Left ventricle myocardium superior (tissue), 1 donor: ENCODE measurements at regions of chr17 and their contacts with region 1.

Region 1: DNA sequence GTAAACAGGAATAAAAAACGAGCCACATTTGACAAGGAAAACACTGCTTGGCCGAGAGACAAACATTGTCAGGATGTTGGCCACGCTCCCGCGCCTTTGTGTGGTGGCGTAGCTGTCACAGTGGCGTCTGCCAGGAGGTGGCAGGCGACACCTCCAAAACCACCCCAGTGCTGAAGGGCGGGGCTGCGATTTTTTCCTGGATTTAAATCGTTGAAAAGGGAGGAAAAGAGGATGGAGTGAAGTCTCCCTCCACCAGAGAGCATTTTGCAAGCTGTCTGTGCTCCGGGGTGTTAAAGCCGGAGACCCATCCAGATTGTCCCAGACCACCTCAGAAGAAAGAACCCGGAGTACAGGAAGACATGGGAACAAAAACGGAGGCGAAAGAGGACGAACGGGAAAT is 12.7 kb downstream of the MRM3 start:
- DNase-seq: peak; percentile 92
- ATAC-seq: peak; percentile 83

Region 2: DNA sequence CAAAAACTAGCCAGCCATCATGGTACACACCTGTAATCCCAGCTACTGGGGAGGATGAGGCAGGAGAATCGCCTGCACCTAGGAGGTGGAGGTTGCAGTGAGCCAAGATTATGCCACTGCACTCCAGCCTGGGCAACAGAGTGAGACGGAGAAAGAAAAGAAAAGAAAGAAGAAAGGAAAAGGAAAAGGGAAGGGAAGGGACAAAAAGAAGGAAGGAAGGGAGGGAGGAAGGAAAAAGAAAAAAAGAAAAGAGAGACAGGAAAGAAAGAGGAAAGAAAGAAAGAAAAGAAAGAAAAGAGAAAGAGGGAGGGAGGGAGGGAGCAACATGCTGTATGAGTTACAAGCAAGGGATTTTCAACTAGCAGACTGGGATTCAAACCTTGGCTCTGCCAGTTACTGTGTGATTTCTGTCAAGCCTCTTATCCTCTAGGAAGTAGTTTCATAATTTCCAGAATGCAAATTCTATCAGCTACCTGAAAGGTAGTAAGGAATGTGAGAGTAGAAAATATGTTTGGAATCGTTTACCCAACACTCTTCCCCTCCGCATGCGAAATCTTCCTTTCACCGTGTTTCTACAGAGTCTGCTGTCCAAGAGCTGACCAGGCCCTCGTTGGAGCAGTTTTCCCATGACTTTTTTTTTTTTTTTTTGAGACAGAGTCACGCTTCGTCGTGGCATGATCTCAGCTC is 123.7 kb before region 1 on chr17:
- intact Hi-C with region 1: no loop called
- DNase-seq: no peak
- ATAC-seq: no peak

Region 3: DNA sequence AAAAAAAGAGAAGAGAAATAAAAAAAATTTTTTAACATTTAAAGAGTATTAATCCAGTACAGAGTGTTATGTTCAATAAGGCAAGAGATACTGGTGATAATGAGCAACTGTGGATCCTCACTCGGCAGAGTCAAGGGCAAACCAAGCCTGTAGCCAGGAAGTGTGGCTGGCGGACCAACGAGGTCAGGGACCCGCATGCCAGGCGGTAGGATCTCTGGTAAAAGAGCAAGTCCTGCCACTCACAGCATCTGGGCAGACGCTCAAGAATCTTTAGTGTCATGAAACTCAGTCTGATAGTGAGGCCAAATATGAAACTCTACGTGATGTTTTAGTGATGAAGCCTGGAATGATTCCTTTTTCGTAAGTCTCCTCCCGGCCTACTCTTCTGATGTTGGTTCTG is 34.5 kb before region 1 on chr17:
- intact Hi-C with region 1: no loop called
- DNase-seq: peak; percentile 69
- ATAC-seq: peak; percentile 85

Region 4: DNA sequence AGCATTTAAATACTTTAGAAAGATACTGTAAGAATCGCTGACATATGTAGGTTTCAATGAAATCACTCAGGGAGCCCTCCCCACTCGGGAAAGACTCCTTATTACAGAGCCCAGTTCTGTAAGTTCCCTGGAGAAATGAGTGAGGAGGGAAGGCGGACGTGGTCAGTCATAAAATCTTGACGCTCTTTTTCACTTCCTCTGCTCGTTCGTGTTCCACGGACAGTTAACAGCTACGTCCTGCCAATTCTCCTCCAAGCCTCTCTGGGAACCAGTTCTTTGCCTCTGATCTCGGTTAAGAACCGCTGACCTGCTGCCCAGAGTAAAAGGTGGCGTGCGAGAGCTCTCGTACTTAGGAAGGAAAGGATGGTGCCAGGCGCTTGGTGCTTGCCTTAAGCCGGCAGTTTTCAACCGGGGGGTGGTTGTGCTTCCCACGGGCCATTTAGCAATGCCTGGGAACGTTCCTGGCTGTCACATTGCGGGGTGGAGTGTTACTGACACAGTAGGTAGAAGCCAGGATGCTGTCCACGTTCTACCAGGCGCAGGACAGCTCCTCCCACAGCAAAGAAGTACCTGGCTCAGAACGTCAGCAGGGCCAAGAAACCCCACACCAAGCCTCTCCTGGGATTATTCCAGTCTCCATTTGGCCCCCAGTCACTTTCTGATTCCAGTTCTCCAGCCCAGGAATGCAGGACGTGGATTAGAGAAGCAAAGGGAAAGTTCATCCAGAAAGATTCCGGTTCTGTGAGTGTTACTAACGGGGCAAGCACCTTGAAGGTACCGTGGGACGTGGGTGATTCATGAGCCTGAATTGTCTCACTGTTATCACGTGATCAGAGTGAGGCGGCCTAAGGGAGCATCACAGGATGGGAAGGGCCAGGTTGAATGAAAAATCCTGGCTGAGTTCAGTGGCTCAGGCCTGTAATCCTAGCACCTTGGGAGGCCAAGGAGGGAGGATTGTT is 75.0 kb after region 1 on chr17:
- intact Hi-C with region 1: no loop called
- DNase-seq: peak; percentile 52
- ATAC-seq: peak; percentile 65

Region 5: GRCh38 chr17:979538-980405 is 184.9 kb after region 1 on chr17 and contains the start of gene NXN:
- intact Hi-C with region 1: loop called (anchors 5 kb)
- DNase-seq: peak; percentile 94
- ATAC-seq: peak; percentile 95
- total RNA-seq, gene NXN: 18.9 TPM

Region 6: GRCh38 chr17:1039511-1040215 is 244.8 kb after region 1 on chr17:
- intact Hi-C with region 1: loop called (anchors 10 kb)
- DNase-seq: peak; percentile 87
- ATAC-seq: peak; percentile 73